Right ventricle myocardium inferior (tissue), 1 donor: ENCODE measurements at regions of chr6 and their contacts with region 1.

Region 1: DNA sequence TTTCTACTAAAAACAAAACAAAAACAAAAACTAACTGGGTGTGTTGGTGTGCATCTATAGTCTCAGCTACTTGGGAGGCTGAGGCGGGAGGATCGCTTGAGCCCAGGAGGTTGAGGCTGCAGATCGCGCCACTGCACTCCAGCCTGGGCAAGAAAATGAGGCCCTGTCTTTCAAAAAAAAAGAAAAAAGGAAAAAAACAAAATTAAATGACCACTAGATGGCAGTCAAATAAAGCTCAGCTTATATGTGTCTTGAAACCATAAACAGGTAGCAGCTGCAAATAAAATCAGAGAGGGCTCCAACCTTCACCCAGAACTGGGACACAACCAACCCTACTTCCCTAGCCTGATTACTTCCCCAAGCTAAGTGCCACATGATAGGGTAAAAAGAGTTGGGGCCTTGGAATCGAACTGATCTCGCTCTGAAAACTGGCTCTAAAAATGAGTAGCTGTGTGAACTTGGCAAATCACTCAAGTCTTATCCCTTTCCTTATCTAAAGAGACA is 67.1 kb upstream of the ADGRF4 start:
- DNase-seq: no peak
- ATAC-seq: peak; percentile 52

Region 2: DNA sequence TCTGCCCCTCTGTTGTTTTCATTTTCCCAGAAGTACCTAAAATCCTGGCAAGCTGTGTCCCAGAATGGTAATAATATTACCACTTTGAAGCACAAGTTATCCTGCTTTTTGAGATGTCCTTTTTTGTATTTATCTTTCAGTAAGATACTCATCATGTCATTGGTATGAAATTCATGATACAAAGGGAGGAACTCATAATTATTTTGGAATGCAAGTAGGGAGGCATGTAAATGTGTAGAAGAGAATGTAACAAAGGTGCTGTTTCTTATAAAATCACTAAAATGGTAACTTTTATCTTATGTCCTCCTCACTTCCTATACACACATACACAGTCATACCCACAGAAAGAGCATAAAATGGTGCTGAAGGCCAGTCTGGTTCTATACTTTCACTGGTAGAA is 43.8 kb before region 1 on chr6:
- intact Hi-C with region 1: no loop called
- DNase-seq: no peak
- ATAC-seq: no peak

Region 3: GRCh38 chr6:47733879-47734558 is 102.7 kb after region 1 on chr6:
- intact Hi-C with region 1: loop called (anchors 2 kb)
- DNase-seq: no peak
- ATAC-seq: no peak

Region 4: DNA sequence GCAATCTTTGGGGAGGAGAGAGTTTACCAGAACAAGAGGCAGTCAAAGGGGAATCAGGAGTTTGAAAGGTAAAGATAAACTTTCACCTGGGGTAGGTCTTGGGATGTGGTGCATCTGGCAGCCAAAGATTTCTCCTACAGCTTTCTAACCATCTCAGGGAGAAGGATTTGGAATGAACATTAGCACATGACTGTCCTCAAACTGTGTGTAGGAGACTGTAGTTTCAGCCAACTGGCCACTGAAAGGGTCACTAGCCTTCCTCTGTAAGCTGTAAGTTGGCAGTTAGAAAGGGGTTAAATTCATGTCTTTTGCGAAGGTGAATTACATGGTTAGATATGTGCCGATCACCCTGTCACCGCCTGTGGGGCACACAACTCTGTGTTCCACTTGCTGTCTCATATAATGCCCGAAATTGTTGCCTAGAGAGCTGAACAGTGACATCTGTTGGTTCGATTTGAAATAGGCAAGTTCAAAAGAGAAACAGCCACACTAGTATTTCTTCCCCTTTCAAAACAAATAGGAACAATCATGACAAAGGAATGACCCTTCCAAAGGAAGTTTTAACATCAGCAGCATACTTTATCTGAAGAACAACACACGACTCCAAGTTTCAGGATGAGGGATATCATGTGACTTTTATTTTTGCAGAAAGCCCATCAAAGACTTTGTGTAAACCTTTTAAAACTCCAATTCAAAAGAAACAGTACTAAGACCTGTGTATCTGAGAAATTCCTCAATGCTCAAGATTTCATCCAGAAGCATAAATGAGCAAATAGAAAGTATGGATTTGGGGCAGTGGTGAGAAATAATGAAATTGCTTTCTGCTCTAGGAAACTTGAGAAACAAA is 149.4 kb after region 1 on chr6:
- intact Hi-C with region 1: loop called (anchors 1 kb)
- DNase-seq: no peak
- ATAC-seq: peak; percentile 79